ENCODE measurements at regions of chr14 and their contacts with region 1.

Region 1: DNA sequence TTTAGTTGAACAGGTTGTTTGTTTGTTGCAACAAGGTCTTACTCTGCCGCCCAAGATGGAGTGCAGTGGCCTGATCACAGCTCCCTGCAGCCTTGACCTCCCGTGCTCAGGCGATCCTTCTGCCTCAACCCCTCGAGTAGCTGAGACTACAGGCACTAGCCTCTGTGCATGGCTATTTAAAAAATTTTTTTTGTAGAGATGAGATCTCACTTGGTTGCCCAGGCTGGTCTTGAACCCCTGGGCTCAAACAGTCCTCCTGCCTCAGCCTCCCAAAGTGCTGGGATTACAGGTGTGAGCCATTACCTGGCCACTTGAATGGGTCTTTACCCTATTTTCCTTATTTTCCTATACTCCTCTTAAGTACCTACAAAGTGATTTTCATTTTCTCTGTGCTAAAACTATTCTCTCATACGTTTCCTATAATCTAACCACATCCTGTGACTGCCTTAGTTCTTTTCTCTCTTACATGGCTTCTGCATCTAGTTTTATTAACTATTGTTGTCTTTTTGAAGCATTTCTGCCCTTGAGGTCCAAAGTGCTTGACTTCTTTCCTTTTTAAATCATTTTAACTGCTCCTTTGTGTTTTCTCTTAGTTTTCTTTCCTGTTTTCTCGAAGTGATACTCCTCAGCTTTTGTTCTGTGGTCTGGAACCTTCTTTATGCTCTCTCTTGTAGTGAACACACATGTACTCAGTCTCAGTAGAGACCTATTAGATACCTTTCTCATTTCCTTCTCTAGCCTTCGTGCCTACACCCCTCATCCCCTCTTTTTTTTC is 14.1 kb downstream of the GPX2 start:
- DNase-seq: peak in 3 of 10 donors; percentile 51 to 72 (median 71)
- ATAC-seq: peak; percentile 73 to 88
- H3K4me3 Mint-ChIP-seq: no peak overlapping the region
- H3K27ac Mint-ChIP-seq: no peak overlapping the region
- H3K4me1 Mint-ChIP-seq: peaks cover 18 to 63% (median 26%) of the 10 kb centered on the region in 4 donors
- H3K27me3 Mint-ChIP-seq: no peaks in the 10 kb centered on the region

Region 2: GRCh38 chr14:64914237-64914971 is 14.0 kb before region 1 on chr14 and contains the start of gene CHURC1:
- POLR2A ChIA-PET with region 1: interaction called, 67 read pairs
- DNase-seq: peak; percentile 88 to 99 (median 97)
- ATAC-seq: peak; percentile 94 to 95
- H3K4me3 Mint-ChIP-seq: peak within 1 kb of the TSS; percentile 84 to 97 (median 92)
- H3K27ac Mint-ChIP-seq: peak within 1 kb of the TSS; percentile 93 to 99 (median 98)
- H3K4me1 Mint-ChIP-seq: peaks cover 30 to 56% (median 51%) of the 10 kb centered on the region in 4 donors
- H3K27me3 Mint-ChIP-seq: peaks cover 0 to 2% (median 0%) of the 10 kb centered on the region in 5 donors
- polyA plus RNA-seq, gene CHURC1: 122 to 166 (median 148) TPM

Region 3: GRCh38 chr14:64956697-64957406 is 28.4 kb after region 1 on chr14:
- POLR2A ChIA-PET with region 1: interaction called, 13 read pairs
- DNase-seq: no peak
- ATAC-seq: no peak
- H3K4me3 Mint-ChIP-seq: no peak overlapping the region
- H3K27ac Mint-ChIP-seq: peak overlapping the region in 1 of 10 donors; percentile 27
- H3K4me1 Mint-ChIP-seq: peaks cover 3 to 33% (median 22%) of the 10 kb centered on the region in 4 donors
- H3K27me3 Mint-ChIP-seq: no peaks in the 10 kb centered on the region

Region 4: GRCh38 chr14:64968651-64969050 is 40.2 kb after region 1 on chr14:
- POLR2A ChIA-PET with region 1: no interaction called
- DNase-seq: no peak
- ATAC-seq: no peak
- H3K4me3 Mint-ChIP-seq: no peak overlapping the region
- H3K27ac Mint-ChIP-seq: peak overlapping the region in 1 of 10 donors; percentile 35
- H3K4me1 Mint-ChIP-seq: peaks cover 8 to 22% (median 15%) of the 10 kb centered on the region in 4 donors
- H3K27me3 Mint-ChIP-seq: no peaks in the 10 kb centered on the region

Region 5: GRCh38 chr14:65170768-65171507 is 242.5 kb after region 1 on chr14:
- POLR2A ChIA-PET with region 1: no interaction called
- DNase-seq: peak in 7 of 10 donors; percentile 2 to 68 (median 38)
- ATAC-seq: peak; percentile 84 to 88
- H3K4me3 Mint-ChIP-seq: peak overlapping the region; percentile 49 to 86 (median 72)
- H3K27ac Mint-ChIP-seq: peak overlapping the region in 5 of 10 donors; percentile 4 to 63 (median 58)
- H3K4me1 Mint-ChIP-seq: peaks cover 5 to 15% (median 11%) of the 10 kb centered on the region in 4 donors
- H3K27me3 Mint-ChIP-seq: peaks cover 5 to 16% (median 9%) of the 10 kb centered on the region in 5 donors

Region 6: DNA sequence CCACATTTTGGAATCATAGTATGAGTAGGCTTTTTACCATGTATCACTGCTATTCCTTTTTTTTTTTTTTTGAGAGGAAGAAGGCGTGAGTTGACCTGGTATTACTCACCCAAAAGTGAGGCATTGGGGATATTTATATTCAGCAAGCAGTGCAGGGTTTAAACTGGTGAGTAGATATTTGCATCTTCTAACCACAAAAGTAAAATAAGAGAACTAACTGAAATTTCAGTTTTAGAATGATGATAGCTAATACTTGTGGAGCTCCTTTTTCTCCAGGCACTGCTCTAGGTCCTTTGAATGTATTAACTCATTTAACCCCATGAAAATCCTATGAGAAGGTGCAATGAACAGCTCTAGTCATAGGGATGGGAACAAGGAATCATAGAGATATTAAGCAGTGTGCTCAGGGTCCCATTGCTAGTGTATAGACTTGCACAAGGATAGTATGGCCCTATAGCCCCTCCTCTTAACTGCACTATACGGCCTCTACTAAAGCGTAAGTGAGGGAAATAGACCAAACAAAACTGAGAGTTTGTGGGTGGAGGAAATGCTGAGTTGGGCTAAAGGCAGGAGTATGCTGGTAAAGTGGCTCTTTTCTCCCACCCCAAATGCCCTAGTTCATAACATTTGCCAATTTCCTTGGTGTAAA is 278.1 kb after region 1 on chr14:
- POLR2A ChIA-PET with region 1: interaction called, 10 read pairs
- DNase-seq: no peak
- ATAC-seq: peak in 1 of 2 donors; percentile 43
- H3K4me3 Mint-ChIP-seq: peak overlapping the region in 8 of 10 donors; percentile 10 to 69 (median 58)
- H3K27ac Mint-ChIP-seq: peak overlapping the region in 7 of 10 donors; percentile 25 to 91 (median 78)
- H3K4me1 Mint-ChIP-seq: peaks cover 25 to 74% (median 48%) of the 10 kb centered on the region in 4 donors
- H3K27me3 Mint-ChIP-seq: no peaks in the 10 kb centered on the region

Measured in naive thymus-derived CD8-positive, alpha-beta T cell (primary cell).